ENCODE measurements at regions of chr21 and their contacts with region 1.

Region 1: DNA sequence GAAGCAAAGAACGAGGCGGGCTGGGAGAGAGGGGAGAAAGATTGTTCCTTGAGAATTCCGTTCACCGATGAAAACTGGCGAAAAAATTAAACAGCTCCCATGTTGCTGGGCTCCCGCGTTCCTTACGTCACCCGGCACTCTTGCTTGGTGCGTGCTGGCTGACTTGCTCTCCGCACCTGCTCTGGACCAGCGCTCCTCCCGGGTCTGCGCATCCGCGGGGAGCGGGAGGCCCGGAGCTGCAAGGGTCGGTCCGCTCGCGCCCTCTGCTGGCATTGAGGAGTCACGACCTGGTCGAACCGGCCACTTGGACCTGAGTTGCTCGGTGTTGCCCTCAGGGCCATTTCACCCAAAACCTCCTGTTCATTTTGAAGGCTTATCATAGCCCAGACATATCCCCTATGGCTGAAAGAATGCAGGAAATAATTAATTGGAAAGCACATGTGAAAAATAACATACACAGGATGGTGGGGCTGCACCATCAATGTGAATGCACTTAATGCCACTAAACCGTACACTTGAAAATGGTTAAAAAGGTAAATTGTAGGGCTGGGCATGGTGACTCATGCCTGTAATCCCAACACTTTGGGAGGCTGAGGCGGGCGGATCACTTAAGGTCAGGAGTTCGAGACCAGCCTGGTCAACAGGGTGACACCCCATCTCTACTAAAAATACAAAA is 98.9 kb upstream of the BACE2 start:
- DNase-seq: peak; percentile 80
- ATAC-seq: peak; percentile 84
- H3K4me3 Mint-ChIP-seq: peak overlapping the region; percentile 34
- H3K27ac Mint-ChIP-seq: no peak overlapping the region
- H3K4me1 Mint-ChIP-seq: peaks cover 8% of the 10 kb centered on the region
- H3K27me3 Mint-ChIP-seq: peaks cover 32% of the 10 kb centered on the region
- CTCF ChIP-seq: peak; percentile 89

Region 2: DNA sequence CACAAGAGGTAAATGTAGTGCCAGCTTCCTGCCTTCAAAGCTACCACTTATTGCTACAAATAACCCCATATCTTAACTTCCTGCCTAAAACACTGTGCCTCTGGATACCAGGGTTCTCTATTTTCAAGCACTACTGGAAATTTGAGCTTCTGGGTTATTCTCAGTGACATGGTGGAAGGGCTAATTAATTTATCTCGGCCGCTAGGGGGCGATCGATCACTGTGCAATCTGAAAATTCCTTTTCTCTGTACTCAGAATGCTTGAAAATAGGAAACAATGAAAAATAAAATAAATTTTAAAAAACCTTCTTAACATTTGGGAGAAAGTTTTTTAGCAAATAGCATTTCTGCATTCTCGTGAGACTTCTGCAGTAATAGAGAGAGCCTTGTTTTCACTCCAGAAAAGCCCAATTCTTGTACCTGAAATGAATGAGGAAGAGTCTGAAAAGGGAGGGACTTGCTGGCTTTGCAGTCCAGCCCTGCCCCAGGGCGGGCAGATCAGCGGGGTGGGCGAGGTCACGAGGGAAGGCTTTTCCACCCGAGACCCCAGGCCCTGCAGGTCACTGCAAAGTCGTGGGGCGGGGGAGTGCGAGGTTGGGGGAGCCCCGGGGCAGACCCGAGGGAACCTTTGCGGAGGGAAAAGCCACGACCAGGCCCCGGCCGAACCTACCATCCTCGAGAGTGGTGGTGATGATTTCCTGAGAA is 925.1 kb before region 1 on chr21:
- CTCF ChIA-PET with region 1: interaction called, 4 read pairs
- POLR2A ChIA-PET with region 1: no interaction called
- intact Hi-C with region 1: loop called (anchors 5 kb)
- DNase-seq: peak; percentile 60
- ATAC-seq: no peak
- H3K4me3 Mint-ChIP-seq: no peak overlapping the region
- H3K27ac Mint-ChIP-seq: no peak overlapping the region
- H3K4me1 Mint-ChIP-seq: peaks cover 2% of the 10 kb centered on the region
- H3K27me3 Mint-ChIP-seq: no peaks in the 10 kb centered on the region
- CTCF ChIP-seq: peak; percentile 85

Region 3: DNA sequence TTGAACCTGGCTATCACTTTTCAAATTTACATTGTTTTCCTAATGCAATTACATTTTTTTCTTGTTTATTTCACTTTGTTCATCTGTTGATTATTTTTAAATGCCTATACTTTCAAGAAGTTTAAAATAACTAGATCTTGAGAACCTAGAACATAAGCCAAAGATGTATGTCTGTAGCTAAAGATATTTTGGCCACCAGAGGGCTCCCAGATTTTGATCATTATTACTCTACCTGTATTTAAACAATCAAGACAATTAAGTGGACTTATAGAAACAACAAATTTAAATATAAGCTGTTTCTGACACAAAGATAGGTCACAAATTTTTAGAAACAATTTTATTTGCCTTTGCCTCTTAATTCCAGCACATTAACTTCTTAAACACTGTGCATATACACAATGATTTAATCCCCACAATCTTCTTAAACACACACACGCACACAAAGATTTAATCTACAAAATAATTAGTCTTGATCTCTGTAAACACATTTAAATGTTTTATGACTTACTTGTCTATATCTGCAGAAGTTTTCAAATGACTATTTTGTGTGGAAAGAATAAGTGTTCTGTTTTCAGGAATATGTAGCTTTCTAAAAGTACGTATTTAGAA is 602.1 kb before region 1 on chr21:
- CTCF ChIA-PET with region 1: interaction called, 15 read pairs
- POLR2A ChIA-PET with region 1: no interaction called
- intact Hi-C with region 1: no loop called
- DNase-seq: peak; percentile 13
- ATAC-seq: no peak
- H3K4me3 Mint-ChIP-seq: no peak overlapping the region
- H3K27ac Mint-ChIP-seq: no peak overlapping the region
- H3K4me1 Mint-ChIP-seq: no peaks in the 10 kb centered on the region
- H3K27me3 Mint-ChIP-seq: peaks cover 2% of the 10 kb centered on the region
- CTCF ChIP-seq: no peak

Region 4: DNA sequence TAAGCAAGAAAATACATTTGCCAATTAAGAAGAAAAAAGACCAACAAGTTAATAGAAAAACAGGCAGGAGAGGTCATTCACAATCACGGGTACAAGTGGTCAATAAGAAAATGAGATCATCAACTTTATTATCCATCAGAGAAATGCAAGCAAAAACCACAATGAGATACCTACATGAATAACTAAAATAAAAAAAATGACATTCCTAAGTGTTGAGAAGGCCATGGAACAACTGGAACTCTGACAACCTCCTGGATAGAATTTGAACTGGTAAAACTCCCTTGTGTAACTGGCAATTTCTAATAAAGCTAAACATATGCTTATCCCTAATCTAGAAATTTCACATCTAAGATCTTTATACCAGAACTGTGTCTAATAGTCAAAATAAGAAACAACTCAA is 36.6 kb before region 1 on chr21:
- CTCF ChIA-PET with region 1: no interaction called
- POLR2A ChIA-PET with region 1: no interaction called
- intact Hi-C with region 1: no loop called
- DNase-seq: no peak
- ATAC-seq: no peak
- H3K4me3 Mint-ChIP-seq: no peak overlapping the region
- H3K27ac Mint-ChIP-seq: no peak overlapping the region
- H3K4me1 Mint-ChIP-seq: no peaks in the 10 kb centered on the region
- H3K27me3 Mint-ChIP-seq: peaks cover 14% of the 10 kb centered on the region
- CTCF ChIP-seq: no peak

Region 5: DNA sequence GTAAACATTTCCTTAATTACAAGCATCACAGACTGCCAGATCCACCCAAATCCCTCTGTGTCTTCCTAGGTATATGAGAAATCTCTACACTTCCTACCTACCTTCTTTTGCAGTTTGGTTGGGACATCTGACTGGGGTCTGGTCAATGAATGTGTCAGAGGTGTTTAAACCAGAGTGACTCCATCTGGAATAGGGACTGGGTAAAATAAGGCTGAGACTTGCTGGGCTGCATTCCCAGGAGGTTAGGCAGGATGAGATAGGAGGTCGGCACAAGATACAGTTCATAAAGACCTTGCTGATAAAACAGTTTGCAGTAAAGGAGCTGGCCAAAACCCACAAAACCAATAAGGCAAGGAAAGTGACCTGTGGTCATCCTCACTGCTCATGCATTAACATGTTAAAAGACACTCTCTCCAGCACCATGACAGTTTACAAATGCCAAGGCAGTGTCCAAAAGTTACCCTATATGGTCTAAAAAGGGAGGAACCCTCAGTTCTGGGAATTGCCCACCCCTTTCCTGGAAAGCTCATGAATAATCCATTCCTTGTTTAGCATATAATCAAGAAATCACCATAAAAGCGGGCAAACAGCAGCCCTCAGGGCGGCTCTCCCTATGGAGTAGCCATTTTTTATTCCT is 11.5 kb after region 1 on chr21:
- CTCF ChIA-PET with region 1: no interaction called
- POLR2A ChIA-PET with region 1: no interaction called
- intact Hi-C with region 1: no loop called
- DNase-seq: no peak
- ATAC-seq: no peak
- H3K4me3 Mint-ChIP-seq: no peak overlapping the region
- H3K27ac Mint-ChIP-seq: no peak overlapping the region
- H3K4me1 Mint-ChIP-seq: no peaks in the 10 kb centered on the region
- H3K27me3 Mint-ChIP-seq: peaks cover 3% of the 10 kb centered on the region
- CTCF ChIP-seq: no peak